RWPE1 (cell line): ENCODE measurements at regions of chr18 and their contacts with region 1.

Region 1: DNA sequence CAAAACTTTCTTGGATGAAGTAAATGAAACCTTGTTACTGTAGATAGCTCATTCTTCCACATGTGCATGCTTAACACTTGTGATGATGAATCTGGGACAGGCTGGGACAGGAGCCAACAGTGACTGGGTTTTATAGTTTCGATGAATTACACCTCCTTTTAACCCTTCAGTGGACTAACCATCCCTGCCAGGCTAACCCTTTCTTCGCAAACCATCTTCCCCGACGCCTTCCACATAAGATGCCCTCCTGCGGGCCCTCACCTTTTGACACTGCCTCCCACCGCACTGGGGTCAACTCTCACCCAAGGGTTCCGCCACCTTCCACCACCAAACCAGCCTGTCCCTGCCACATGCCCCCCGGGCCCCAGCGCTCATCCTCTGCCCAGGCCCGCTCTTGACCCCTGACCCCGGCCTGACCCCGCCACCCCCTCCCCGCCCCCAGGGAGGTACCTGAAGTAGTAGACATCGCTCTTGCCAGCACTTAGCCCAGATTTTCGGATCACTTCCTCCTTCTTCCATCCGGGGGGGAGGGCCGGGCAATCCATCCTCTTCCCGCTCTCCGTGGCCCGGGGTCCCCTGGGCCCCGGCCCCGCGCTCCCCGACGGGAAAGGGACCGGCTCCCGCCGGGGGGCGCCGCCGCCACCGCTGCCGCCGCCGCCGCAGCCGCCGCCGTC is 764 bp downstream of the MBD2 start:
- DNase-seq: peak; percentile 49
- H3K27ac ChIP-seq: peak overlapping the region; percentile 97
- CTCF ChIP-seq: no peak

Region 2: DNA sequence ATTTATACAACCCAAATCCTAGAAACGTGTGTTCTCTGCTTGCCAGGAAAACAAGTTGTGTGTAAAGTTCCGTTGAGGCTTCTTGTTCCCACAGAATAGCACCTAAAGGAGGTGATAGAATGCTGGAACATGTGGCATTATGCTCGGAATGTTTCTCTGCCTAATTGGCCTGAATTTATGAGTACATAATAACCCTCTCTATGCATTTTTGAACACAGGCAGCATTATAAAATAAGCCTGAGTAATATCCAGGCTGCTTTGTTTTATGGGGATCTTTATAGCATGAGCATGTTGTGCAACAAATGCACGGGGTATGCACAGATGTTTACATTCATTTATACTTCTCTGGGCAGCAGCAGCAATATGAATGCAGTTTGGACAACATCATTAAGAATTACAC is 385.0 kb before region 1 on chr18:
- CTCF ChIA-PET with region 1: no interaction called
- POLR2A ChIA-PET with region 1: no interaction called
- DNase-seq: no peak
- H3K27ac ChIP-seq: no peak overlapping the region
- CTCF ChIP-seq: no peak

Region 3: GRCh38 chr18:54033052-54033451 is 190.7 kb before region 1 on chr18:
- CTCF ChIA-PET with region 1: no interaction called
- POLR2A ChIA-PET with region 1: no interaction called
- DNase-seq: no peak
- H3K27ac ChIP-seq: no peak overlapping the region
- CTCF ChIP-seq: no peak

Region 4: DNA sequence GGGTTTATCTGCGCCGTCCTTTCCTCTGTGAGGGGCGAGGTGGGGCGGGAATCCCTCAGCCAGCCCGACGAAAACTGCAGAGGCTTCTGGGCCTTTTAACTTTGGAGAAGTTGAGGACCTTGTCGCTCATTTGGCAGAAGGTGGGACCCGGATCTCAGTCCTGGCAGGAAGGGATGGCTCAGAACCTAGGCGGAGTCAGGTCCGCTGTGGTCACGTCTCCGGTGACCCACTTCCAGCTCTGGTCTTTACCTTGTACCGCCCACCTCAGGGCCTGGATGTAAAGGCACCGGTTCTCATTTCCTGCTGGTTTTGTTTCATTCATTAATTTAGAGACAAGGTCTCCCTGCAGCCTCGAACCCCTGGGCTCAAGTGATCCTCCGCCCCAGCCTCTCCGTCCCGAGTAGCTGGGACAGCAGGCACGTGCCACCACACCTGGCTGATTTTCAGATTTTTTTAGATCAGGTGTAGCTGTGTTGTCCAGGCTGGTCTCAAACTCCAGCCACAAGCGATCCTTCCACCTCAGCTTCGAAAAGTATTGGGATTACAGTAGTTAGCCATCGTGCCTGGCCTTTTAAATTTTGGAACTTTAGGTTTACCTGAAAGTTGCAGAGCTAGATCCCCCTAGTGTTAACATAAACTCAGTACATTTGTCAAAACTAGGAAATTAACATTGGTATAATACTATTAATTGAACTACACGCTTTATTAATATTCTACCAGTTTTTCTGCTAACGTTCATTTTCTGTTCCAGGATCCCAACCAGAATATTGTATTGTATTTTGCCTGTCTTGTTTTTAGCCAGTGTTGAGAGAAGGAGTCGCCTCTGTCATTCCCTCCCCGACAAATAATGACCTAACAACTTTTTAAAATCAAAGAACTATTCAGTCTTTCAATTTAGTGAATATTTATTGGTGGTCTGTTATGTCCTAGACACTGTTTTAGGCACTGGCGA is 46.5 kb after region 1 on chr18:
- CTCF ChIA-PET with region 1: interaction called, 15 read pairs
- POLR2A ChIA-PET with region 1: interaction called, 4 read pairs
- DNase-seq: no peak
- H3K27ac ChIP-seq: peak overlapping the region; percentile 96
- CTCF ChIP-seq: peak; percentile 56; the same call in 1 of the 2 replicates

Region 5: GRCh38 chr18:54280220-54280569 is 56.5 kb after region 1 on chr18:
- CTCF ChIA-PET with region 1: no interaction called
- POLR2A ChIA-PET with region 1: no interaction called
- DNase-seq: no peak
- H3K27ac ChIP-seq: no peak overlapping the region
- CTCF ChIP-seq: no peak